Sciatic nerve (tissue), 2 donors: ENCODE measurements at regions of chr19 and their contacts with region 1.

Region 1: DNA sequence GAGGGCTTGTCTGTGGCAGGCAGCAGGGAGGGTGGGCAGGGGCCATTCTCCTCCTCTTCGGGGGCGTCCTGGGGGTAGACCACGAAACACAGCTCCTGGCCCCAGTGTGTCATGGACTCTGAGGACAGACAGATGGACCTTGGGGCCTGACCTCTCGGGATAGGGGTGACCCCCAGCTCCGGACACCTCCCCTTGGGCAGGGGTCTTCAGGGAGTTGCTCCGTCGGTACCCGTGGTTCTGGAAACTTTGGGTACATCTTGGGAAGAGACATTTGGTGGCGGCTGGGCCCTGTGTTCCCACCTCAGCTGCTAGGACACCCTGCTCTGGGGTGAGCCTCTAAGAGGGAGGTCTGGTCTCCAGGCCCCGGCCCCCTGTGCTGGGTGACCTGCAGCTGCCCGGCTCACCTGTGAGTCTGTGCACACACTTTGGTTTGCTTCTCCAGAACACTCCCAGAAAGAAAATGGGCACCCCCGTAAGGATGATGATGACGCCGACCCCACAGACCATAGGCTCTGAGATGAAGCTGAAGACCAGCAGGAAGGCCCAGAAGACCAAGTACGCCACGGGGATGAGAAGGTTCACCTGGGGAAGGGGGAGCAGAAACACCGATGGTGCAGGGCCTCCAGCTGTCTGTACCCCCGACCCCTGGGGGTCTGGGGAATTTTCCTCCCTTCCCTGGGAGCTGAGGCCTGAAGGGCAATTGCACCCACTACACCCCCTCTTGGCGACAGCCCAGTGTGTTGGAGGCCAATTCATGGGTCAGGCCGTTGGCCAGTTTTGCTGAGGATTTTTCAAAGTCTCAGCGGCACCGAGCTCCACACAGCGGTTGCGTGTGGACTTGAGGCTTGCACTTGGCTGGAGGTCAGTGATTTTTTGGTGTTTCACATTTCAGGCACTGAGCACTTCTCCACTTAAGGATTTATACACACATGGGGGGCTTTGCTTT is 15.0 kb downstream of the LRP3 start:
- DNase-seq: no peak
- ATAC-seq: peak; percentile 79

Region 2: GRCh38 chr19:33143897-33144405 is 65.2 kb before region 1 on chr19:
- intact Hi-C with region 1: loop called (anchors 10 kb)
- DNase-seq: peak; percentile 78
- ATAC-seq: peak; percentile 96

Region 3: DNA sequence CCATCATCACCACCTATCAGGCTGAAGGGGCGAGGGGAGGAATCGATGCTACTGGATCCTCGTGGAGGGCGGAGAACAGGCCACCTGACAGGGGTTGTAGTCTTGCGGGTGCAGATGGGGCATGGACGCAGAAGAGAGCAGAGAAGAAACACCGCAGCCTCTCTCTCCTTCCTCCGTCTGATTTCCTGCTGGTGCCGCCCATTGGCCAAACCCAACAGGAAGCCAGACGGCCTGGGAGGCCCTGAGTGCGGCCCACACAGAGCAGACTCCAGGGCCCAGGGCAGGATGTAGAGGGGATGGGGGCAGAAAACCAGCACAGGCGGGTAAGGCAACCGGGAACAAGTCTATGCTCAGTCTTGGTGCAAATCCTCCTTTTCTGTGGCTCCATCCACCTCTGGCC is 77.7 kb after region 1 on chr19:
- intact Hi-C with region 1: no loop called
- DNase-seq: no peak
- ATAC-seq: no peak